H1 (cell line): ENCODE measurements at regions of chr1 and their contacts with region 1.

Region 1: DNA sequence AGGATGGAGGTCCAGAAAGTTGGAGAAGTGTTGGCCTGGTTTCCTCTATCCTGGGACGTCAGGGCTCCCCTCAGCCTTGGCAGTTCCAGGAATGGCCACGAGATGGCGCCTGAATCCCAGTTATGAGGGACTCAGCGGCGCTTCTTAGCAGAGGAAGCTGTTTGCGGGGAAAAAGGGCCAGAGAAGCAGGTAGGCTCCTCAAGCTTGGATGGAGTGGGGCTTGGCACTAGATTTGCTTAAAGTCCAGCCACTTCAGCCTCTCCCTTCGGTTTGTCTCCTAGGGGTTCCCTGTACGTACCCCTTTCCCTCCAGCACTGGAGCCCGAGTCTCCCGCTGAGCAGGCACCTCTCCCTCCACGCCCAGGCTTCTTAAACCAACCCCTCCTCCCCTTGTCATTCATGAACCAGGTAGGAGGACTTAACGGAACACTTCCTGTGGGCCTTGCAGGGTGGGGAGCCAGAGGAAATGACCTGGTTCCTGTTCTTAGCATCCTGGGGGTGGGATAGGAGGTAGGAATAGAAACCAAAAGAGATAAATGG is 32.0 kb upstream of the TENT5B start:
- DNase-seq: peak; percentile 70 to 99
- H3K4me3 ChIP-seq: peak overlapping the region in 3 of 4 experiments; percentile 12 to 39 (median 24); a peak in 4 of 8 replicates
- H3K27ac ChIP-seq: no peak overlapping the region
- H3K4me1 ChIP-seq: peaks cover 7 to 25% (median 12%) of the 10 kb centered on the region in 4 experiments
- H3K27me3 ChIP-seq: no peaks in the 10 kb centered on the region
- CTCF ChIP-seq: peak; percentile 94 to 100 (median 97)
- EP300 ChIP-seq: no peak
- POLR2A ChIP-seq: no peak
- RAD21 ChIP-seq: peak; percentile 99

Region 2: GRCh38 chr1:26993237-26994019 is 51.3 kb before region 1 on chr1 and contains the start of gene TRNP1:
- CTCF ChIA-PET with region 1: interaction called, 143 read pairs
- POLR2A ChIA-PET with region 1: interaction called, 1,829 read pairs
- DNase-seq: peak in 1 of 2 experiments; percentile 91
- H3K4me3 ChIP-seq: peak within 1 kb of the TSS; percentile 57 to 97 (median 75)
- H3K27ac ChIP-seq: peak within 1 kb of the TSS; percentile 40; the same call in 1 of the 2 replicates
- H3K4me1 ChIP-seq: peaks cover 9 to 32% (median 15%) of the 10 kb centered on the region in 4 experiments
- H3K27me3 ChIP-seq: no peaks in the 10 kb centered on the region; a peak in 2 of 7 replicates
- CTCF ChIP-seq: no peak
- EP300 ChIP-seq: no peak
- POLR2A ChIP-seq: peak in 1 of 2 experiments; percentile 96; a peak in 2 of 3 replicates
- RAD21 ChIP-seq: no peak; a peak in 1 of 4 replicates
- total RNA-seq, gene TRNP1: 51.6 and 51.7 TPM in 2 replicates

Region 3: DNA sequence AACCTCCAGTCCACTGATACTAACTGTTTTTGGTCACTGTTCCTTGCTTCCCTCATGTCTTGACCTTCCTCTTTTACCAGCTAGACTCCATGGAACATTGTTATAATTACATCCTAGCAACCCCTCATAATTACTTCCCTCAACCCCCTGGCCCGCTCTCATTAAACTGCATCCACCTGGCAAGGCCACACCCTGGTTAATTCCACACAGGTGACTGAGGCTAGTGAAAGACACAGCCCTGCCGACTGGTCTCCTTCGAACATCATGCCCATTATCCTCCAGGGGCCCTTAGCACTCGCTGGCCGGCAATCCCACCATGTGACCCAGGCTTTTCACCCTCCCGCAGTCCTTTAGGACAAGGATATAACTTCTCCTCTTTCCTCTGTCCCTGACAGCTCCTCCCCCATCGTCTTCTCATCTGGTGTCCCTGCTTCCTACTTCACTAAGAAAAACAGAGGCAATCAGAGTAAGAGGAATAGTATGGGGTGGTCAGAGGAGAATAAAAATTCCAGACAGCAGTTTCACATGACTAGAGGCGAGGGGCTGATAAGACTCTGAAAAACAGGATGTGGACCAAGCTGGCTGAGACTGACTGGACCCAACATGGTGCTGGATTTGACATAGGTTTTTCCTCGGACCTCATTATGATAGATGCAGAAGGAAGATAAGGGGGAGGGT is 23.2 kb before region 1 on chr1:
- CTCF ChIA-PET with region 1: interaction called, 12 read pairs
- POLR2A ChIA-PET with region 1: interaction called, 1,829 read pairs
- DNase-seq: no peak
- H3K4me3 ChIP-seq: no peak overlapping the region
- H3K27ac ChIP-seq: no peak overlapping the region
- H3K4me1 ChIP-seq: peaks cover 0 to 6% (median 4%) of the 10 kb centered on the region in 4 experiments
- H3K27me3 ChIP-seq: no peaks in the 10 kb centered on the region; a peak in 1 of 7 replicates
- CTCF ChIP-seq: no peak
- EP300 ChIP-seq: no peak
- POLR2A ChIP-seq: no peak
- RAD21 ChIP-seq: no peak

Region 4: GRCh38 chr1:27071049-27071416 is 26.4 kb after region 1 on chr1:
- CTCF ChIA-PET with region 1: interaction called, 270 read pairs
- POLR2A ChIA-PET with region 1: interaction called, 7 read pairs
- DNase-seq: no peak
- H3K4me3 ChIP-seq: no peak overlapping the region
- H3K27ac ChIP-seq: no peak overlapping the region
- H3K4me1 ChIP-seq: peaks cover 0 to 9% (median 6%) of the 10 kb centered on the region in 4 experiments; a peak in 5 of 7 replicates
- H3K27me3 ChIP-seq: no peaks in the 10 kb centered on the region
- CTCF ChIP-seq: no peak
- EP300 ChIP-seq: no peak
- POLR2A ChIP-seq: no peak
- RAD21 ChIP-seq: no peak

Region 5: GRCh38 chr1:27097484-27097917 is 52.8 kb after region 1 on chr1:
- CTCF ChIA-PET with region 1: interaction called, 790 read pairs
- POLR2A ChIA-PET with region 1: interaction called, 33 read pairs
- DNase-seq: peak; percentile 38 to 93
- H3K4me3 ChIP-seq: no peak overlapping the region
- H3K27ac ChIP-seq: no peak overlapping the region
- H3K4me1 ChIP-seq: peaks cover 0 to 20% (median 13%) of the 10 kb centered on the region in 4 experiments; a peak in 6 of 7 replicates
- H3K27me3 ChIP-seq: no peaks in the 10 kb centered on the region
- CTCF ChIP-seq: peak in 2 of 3 experiments; percentile 96; a peak in 3 of 4 replicates
- EP300 ChIP-seq: no peak
- POLR2A ChIP-seq: no peak
- RAD21 ChIP-seq: peak; percentile 98 to 99

Region 6: DNA sequence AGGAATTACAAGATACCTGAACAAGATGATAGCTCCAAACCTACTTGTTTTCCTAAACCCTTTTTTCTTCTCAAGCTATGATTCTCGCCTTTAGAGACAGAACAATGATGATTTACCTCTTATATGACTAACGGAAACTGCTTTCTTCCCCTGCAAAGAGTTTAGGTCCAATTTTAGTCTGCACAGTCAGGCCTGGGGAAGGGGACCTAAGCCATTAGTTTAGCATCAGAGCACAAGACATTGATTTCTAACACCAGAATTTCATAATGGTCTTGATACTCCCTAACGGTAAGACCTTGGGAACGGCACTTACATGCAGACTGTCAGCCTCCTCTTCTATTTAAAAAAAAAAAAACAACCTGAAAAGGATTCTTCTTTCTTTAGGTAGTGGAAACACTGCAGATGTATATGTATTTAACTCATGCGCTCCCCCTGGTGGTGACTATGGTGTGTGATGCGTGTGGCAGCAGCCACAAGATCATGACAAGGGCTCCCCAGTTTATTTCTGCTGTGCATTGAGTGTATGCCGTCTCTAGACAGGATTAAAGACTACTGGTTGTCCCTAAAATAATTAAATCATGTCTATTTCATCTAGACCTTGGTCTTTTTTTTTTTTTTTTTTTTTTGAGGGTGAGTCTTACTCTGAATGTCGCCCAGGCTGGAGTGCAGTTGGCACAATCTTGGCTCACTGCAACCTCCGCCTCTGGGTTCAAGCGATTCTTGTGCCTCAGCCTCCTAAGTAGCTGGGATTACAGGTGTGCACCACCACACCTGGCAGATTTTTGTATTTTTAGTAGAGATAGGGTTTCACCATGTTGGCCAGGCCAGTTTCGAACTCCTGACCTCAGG is 240.0 kb after region 1 on chr1:
- CTCF ChIA-PET with region 1: interaction called, 23 read pairs
- POLR2A ChIA-PET with region 1: no interaction called
- DNase-seq: peak in 1 of 2 experiments; percentile 90
- H3K4me3 ChIP-seq: no peak overlapping the region
- H3K27ac ChIP-seq: no peak overlapping the region
- H3K4me1 ChIP-seq: no peaks in the 10 kb centered on the region
- H3K27me3 ChIP-seq: no peaks in the 10 kb centered on the region
- CTCF ChIP-seq: peak; percentile 76 to 81 (median 77)
- EP300 ChIP-seq: no peak
- POLR2A ChIP-seq: no peak
- RAD21 ChIP-seq: peak; percentile 74 to 75